SK-N-SH (cell line): ENCODE measurements at regions of chr15 and their contacts with region 1.

Region 1: DNA sequence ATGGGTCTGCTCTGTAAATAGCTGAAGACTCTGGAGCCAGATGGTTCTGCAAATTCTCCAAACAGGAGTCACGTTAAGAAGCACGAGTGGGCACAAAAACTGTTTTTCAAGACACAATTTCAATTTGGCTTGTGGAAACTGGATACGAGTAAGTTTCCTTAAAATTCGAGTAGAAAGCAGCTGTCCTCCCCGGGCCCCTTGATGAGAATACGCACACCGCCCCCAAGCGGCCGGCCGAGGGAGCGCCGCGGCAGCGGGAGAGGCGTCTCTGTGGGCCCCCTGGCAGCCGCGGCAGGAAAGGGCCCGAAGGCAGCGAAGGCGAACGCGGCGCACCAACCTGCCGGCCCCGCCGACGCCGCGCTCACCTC is 778 bp upstream of the THBS1 start:
- DNase-seq: peak; percentile 89
- H3K4me3 ChIP-seq: peak overlapping the region; percentile 59 to 72
- H3K27ac ChIP-seq: peak overlapping the region; percentile 72 to 94
- H3K4me1 ChIP-seq: peaks cover 5% of the 10 kb centered on the region in 2 experiments; a peak in 2 of 4 replicates
- H3K27me3 ChIP-seq: no peaks in the 10 kb centered on the region
- CTCF ChIP-seq: peak; percentile 89
- EP300 ChIP-seq: no peak
- RAD21 ChIP-seq: peak; percentile 85

Region 2: GRCh38 chr15:38252481-38253412 is 1327.4 kb before region 1 on chr15 and contains the start of gene SPRED1:
- CTCF ChIA-PET with region 1: no interaction called
- POLR2A ChIA-PET with region 1: no interaction called
- DNase-seq: peak; percentile 76
- H3K4me3 ChIP-seq: peak within 1 kb of the TSS; percentile 91
- H3K27ac ChIP-seq: peak within 1 kb of the TSS; percentile 89 to 97
- H3K4me1 ChIP-seq: peaks cover 17 to 19% of the 10 kb centered on the region in 2 experiments; a peak in 3 of 4 replicates
- H3K27me3 ChIP-seq: no peaks in the 10 kb centered on the region
- CTCF ChIP-seq: no peak
- EP300 ChIP-seq: no peak
- RAD21 ChIP-seq: 0 out of 2 replicates have a peak, but pooled peaks have one; percentile 4
- polyA plus RNA-seq, gene SPRED1: 4.3 and 4.4 TPM in 2 replicates

Region 3: GRCh38 chr15:38707802-38708671 is 872.1 kb before region 1 on chr15:
- CTCF ChIA-PET with region 1: interaction called, 44 read pairs
- POLR2A ChIA-PET with region 1: no interaction called
- DNase-seq: peak; percentile 44
- H3K4me3 ChIP-seq: no peak overlapping the region
- H3K27ac ChIP-seq: peak overlapping the region; percentile 18 to 36; a peak in 1 of 4 replicates
- H3K4me1 ChIP-seq: no peaks in the 10 kb centered on the region; a peak in 2 of 4 replicates
- H3K27me3 ChIP-seq: no peaks in the 10 kb centered on the region
- CTCF ChIP-seq: peak; percentile 85
- EP300 ChIP-seq: no peak
- RAD21 ChIP-seq: peak; percentile 98

Region 4: GRCh38 chr15:39125904-39126303 is 454.2 kb before region 1 on chr15:
- CTCF ChIA-PET with region 1: interaction called, 14 read pairs
- POLR2A ChIA-PET with region 1: no interaction called
- DNase-seq: peak; percentile 51
- H3K4me3 ChIP-seq: no peak overlapping the region; a peak in 1 of 4 replicates
- H3K27ac ChIP-seq: peak overlapping the region in 1 of 2 experiments; percentile 79; a peak in 2 of 4 replicates
- H3K4me1 ChIP-seq: peaks cover 3 to 37% of the 10 kb centered on the region in 2 experiments
- H3K27me3 ChIP-seq: no peaks in the 10 kb centered on the region
- CTCF ChIP-seq: peak; percentile 76
- EP300 ChIP-seq: no peak
- RAD21 ChIP-seq: peak; percentile 72

Region 5: GRCh38 chr15:39391230-39391629 is 188.9 kb before region 1 on chr15:
- CTCF ChIA-PET with region 1: interaction called, 12 read pairs
- POLR2A ChIA-PET with region 1: no interaction called
- DNase-seq: peak; percentile 39
- H3K4me3 ChIP-seq: no peak overlapping the region
- H3K27ac ChIP-seq: peak overlapping the region in 1 of 2 experiments; percentile 88; a peak in 2 of 4 replicates
- H3K4me1 ChIP-seq: peaks cover 0 to 32% of the 10 kb centered on the region in 2 experiments; a peak in 2 of 4 replicates
- H3K27me3 ChIP-seq: no peaks in the 10 kb centered on the region
- CTCF ChIP-seq: no peak
- EP300 ChIP-seq: peak in 1 of 2 experiments; percentile 83; a peak in 2 of 4 replicates
- RAD21 ChIP-seq: no peak; the same call in 1 of the 2 replicates

Region 6: DNA sequence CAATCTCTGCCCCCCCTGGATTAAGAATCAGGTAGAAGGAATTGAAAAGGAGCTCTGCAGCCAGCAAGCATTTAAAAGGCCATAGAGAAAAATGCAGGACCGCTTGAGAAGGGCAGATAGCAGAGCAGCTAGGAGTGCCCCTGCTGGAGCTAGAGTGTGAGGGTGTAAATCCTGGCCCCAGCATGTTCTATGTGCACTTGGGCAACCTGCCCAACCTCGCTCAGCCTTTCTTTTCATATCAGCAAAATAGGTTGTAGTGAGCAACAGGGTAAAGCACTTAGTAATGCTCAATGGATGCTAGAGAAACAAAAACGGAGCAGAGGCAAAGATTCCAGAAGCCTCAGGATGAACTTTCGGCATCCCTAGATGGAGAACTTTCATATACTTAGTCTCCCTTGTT is 24.2 kb before region 1 on chr15:
- CTCF ChIA-PET with region 1: interaction called, 12 read pairs
- POLR2A ChIA-PET with region 1: no interaction called
- DNase-seq: no peak
- H3K4me3 ChIP-seq: no peak overlapping the region
- H3K27ac ChIP-seq: no peak overlapping the region
- H3K4me1 ChIP-seq: no peaks in the 10 kb centered on the region; a peak in 1 of 4 replicates
- H3K27me3 ChIP-seq: no peaks in the 10 kb centered on the region
- CTCF ChIP-seq: no peak
- EP300 ChIP-seq: no peak
- RAD21 ChIP-seq: no peak

Region 7: DNA sequence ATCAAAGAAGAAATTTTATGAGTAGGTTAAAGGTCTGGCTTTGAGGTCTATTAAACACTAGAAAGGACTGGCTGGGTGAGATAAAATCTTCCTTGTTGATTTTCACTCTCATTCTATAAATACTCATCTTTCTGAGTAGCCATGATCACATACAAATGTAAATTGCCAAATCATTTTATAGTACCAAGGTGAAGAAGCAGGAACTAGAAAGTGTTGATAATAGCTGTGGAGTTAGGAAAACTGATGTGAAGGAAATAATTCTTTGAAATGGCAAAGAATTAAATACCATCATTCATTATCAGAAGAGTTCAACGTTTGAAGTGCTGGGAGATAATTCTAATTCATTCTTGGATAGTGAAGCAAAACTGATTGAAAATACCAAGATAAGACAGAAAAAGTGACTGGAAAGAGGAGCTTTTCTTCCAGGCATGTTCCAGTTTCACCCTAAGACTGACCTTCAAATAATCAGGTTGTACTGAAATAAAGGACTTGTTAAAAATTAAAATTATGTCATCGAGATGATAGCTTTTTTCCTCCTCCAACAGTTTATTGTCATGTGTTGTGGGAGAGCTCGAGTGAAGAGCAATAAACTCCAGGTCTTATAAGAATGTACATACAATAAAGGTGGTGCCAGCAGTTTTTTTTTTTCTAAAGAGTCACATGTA is 18.2 kb after region 1 on chr15:
- CTCF ChIA-PET with region 1: interaction called, 10 read pairs
- POLR2A ChIA-PET with region 1: no interaction called
- DNase-seq: no peak
- H3K4me3 ChIP-seq: no peak overlapping the region
- H3K27ac ChIP-seq: peak overlapping the region in 1 of 2 experiments; percentile 60; a peak in 2 of 4 replicates
- H3K4me1 ChIP-seq: peaks cover 0 to 7% of the 10 kb centered on the region in 2 experiments; a peak in 1 of 4 replicates
- H3K27me3 ChIP-seq: no peaks in the 10 kb centered on the region
- CTCF ChIP-seq: no peak
- EP300 ChIP-seq: no peak
- RAD21 ChIP-seq: no peak